ENCODE measurements at regions of chr5 and their contacts with region 1.

Region 1: GRCh38 chr5:149551200-149552037 is at the start of gene CSNK1A1:
- DNase-seq: peak; percentile 99

Region 2: GRCh38 chr5:149288436-149288835 is 263.0 kb before region 1 on chr5:
- CTCF ChIA-PET with region 1: interaction called, 11 read pairs
- POLR2A ChIA-PET with region 1: no interaction called
- DNase-seq: no peak

Region 3: DNA sequence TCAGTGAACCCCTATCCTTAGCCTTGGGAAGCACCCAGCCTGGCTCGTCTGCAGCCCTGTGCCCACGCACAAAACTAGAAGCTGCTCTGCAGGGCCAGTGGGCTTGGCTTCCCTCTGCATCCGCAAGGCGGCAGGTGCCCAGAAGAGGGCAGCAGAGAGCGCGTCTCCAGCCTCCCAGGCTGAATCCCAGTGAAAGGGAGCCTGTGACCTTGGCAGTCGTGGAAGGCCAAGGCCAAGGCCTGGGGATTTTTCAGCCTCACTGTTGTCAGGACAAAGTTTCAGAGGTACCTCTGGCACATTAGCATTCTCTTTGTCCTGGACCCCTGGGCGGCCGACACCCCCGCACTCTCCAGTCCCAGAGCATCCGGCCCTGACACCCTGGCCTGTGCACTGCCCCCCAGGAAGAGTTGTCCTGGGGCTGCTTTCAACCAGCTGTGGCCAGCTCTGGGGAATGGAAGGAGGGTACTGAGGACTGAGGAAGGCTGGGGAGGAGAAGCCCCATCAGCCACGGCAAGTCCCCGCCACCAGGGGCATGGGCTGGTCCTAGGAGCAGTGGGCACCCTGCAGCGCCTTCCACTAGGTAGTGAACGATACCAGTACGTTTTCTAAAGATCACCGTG is 108.7 kb before region 1 on chr5:
- CTCF ChIA-PET with region 1: interaction called, 14 read pairs
- POLR2A ChIA-PET with region 1: interaction called, 21 read pairs
- DNase-seq: peak; percentile 84

Region 4: DNA sequence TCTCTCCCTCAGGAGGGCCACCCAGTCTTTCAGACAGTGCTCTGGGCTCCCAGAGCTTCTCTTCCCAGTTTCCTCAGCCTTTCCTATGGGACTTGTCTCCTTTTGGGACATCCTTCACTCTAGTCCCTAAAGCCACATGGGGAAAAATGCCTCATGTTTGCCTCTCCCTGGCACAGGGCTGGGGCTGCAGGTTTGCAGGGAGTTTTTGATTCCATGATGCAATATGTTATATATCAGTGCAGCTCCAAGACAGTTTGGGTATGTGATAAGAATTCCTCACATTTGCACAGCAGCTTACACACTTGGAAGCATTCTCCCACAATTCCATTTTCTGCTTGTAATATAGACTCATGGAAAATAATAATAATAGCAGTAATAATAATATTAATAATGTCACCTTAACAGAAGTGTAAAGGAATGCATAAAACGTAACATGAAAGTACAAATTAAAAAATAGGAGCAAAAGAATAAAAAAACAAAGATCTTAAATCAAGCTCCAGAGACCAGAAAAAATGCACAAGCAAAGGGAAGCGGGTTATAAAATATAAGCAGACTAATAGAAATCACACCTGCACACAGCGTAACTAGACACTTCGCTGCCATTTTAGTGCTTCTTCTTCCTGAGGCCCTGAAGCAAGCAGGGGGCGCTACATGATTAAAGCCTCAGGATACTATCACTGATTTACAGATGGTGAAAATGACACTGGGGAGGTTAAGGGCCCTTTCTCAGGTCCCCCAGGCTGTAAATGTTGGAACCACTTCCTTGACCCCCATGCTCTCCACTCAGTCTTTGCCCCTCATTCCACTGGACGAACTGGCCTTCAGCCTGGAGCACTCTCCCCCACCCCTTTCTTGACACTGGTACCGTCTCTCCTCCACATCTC is 102.3 kb before region 1 on chr5:
- CTCF ChIA-PET with region 1: interaction called, 14 read pairs
- POLR2A ChIA-PET with region 1: interaction called, 21 read pairs
- DNase-seq: no peak

Region 5: GRCh38 chr5:149526845-149527580 is 24.4 kb before region 1 on chr5:
- CTCF ChIA-PET with region 1: interaction called, 4 read pairs
- POLR2A ChIA-PET with region 1: interaction called, 24 read pairs
- DNase-seq: no peak

Region 6: GRCh38 chr5:149561848-149562247 is 10.4 kb after region 1 on chr5:
- CTCF ChIA-PET with region 1: interaction called, 3 read pairs
- POLR2A ChIA-PET with region 1: interaction called, 26 read pairs
- DNase-seq: no peak

Region 7: GRCh38 chr5:149572576-149573231 is 21.3 kb after region 1 on chr5:
- CTCF ChIA-PET with region 1: no interaction called
- POLR2A ChIA-PET with region 1: no interaction called
- DNase-seq: no peak

Region 8: GRCh38 chr5:149605998-149606724 is 54.7 kb after region 1 on chr5:
- CTCF ChIA-PET with region 1: no interaction called
- POLR2A ChIA-PET with region 1: no interaction called
- DNase-seq: no peak

Measured in HEK293T (cell line).